Gastrocnemius medialis (tissue), 4 donors: ENCODE measurements at regions of chr2 and their contacts with region 1.

Region 1: DNA sequence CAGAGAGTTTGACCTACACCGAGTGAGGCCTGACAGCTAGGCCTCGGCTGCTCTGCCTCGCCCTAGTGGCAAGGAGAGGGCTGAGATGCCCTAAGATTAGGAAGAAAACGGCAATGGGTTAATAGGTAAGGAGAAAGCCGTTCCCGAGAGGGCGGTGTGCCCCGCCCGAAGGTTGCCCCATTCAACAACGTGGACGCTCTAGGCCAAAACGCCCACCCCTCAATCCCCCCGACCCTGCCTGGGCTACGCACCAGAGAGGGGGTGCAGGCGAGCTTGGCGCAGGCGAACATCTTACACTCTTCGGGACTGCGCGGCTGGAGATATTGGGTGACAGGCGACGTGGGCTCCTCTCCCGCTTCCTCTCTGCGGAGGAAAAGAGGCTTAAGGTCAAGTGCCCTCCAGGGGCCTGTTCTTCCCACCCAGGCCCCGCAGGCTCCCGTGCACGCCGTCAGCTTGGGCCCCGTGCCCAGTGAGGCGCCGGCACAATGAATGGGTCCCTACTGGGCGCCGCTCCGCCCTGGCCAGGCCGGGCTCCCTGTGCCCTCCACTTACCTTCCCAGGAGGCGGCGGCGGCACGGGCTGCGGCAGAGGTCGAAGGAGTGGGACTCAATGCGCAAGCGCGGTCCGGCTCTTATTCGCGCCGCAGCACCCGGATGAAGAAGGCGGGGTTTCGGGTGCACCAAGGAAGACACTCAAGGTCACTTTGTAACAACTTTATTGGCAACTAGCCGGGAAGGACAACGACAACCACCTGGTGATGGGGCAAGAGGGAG is at the start of gene ATP5MC3:
- DNase-seq: peak; percentile 88 to 96
- ATAC-seq: peak; percentile 90 to 92
- H3K4me3 ChIP-seq: peak within 1 kb of the TSS; percentile 64 to 97 (median 90)
- H3K27ac ChIP-seq: peak within 1 kb of the TSS; percentile 85 to 95 (median 90)
- H3K4me1 ChIP-seq: peaks cover 36 to 44% of the 10 kb centered on the region in 2 donors
- H3K27me3 ChIP-seq: no peaks in the 10 kb centered on the region
- CTCF ChIP-seq: peak in 2 of 5 experiments; percentile 30 to 33
- POLR2A ChIP-seq: peak; percentile 77 to 81
- total RNA-seq, gene ATP5MC3: 202 to 358 (median 221) TPM

Region 2: DNA sequence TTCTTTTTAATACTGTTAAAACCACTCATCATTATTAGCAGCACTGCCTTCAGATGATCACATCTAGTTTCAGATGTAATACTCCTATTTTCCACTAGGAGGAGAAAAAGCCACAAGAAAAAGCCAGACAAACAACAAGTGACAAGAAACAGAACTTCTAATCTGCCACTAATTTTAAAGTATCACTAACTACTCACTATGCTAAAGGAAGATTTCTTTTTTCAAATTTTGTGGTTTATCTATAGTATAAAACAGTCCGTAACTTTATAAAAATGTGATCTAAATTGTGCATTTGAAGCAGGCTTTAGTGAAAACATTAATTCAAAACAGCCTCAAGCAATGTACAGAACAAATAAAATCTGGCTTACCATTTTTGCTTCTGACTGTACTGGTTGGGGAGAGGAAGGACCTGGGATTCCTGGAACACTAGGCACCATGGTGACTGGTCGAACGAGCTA is 70.1 kb before region 1 on chr2:
- in situ Hi-C with region 1: loop called in 1 of 4 experiments (anchors 10 kb)
- intact Hi-C with region 1: no loop called
- DNase-seq: no peak
- ATAC-seq: peak in 1 of 2 donors; percentile 58
- H3K4me3 ChIP-seq: no peak overlapping the region
- H3K27ac ChIP-seq: no peak overlapping the region
- H3K4me1 ChIP-seq: no peaks in the 10 kb centered on the region
- H3K27me3 ChIP-seq: no peaks in the 10 kb centered on the region
- CTCF ChIP-seq: peak; percentile 49 to 76 (median 60)
- POLR2A ChIP-seq: no peak

Region 3: GRCh38 chr2:175167792-175168563 is 13.3 kb before region 1 on chr2 and contains the start of gene ATF2:
- in situ Hi-C with region 1: no loop called
- intact Hi-C with region 1: loop called (anchors 1 kb)
- DNase-seq: peak; percentile 99
- ATAC-seq: peak; percentile 95 to 97
- H3K4me3 ChIP-seq: peak within 1 kb of the TSS; percentile 82 to 95 (median 94)
- H3K27ac ChIP-seq: peak within 1 kb of the TSS; percentile 94 to 98 (median 96)
- H3K4me1 ChIP-seq: peaks cover 14 to 15% of the 10 kb centered on the region in 2 donors
- H3K27me3 ChIP-seq: no peaks in the 10 kb centered on the region
- CTCF ChIP-seq: no peak
- POLR2A ChIP-seq: peak; percentile 59 to 83
- total RNA-seq, gene ATF2: 19.5 to 28.1 (median 20.9) TPM